Activated CD4-positive, alpha-beta memory T cell treated with anti-CD3 and anti-CD28 coated beads for 36 hours (primary cell): ENCODE measurements at regions of chr1 and their contacts with region 1.

Region 1: GRCh38 chr1:37692078-37692833 is at the start of gene CDCA8:
- DNase-seq: peak; percentile 99
- H3K4me3 Mint-ChIP-seq: peak within 1 kb of the TSS; percentile 97
- H3K27ac Mint-ChIP-seq: peak within 1 kb of the TSS; percentile 88
- H3K4me1 Mint-ChIP-seq: peaks cover 31% of the 10 kb centered on the region
- H3K27me3 Mint-ChIP-seq: no peaks in the 10 kb centered on the region
- total RNA-seq, gene CDCA8: 55.0 to 56.0 TPM

Region 2: DNA sequence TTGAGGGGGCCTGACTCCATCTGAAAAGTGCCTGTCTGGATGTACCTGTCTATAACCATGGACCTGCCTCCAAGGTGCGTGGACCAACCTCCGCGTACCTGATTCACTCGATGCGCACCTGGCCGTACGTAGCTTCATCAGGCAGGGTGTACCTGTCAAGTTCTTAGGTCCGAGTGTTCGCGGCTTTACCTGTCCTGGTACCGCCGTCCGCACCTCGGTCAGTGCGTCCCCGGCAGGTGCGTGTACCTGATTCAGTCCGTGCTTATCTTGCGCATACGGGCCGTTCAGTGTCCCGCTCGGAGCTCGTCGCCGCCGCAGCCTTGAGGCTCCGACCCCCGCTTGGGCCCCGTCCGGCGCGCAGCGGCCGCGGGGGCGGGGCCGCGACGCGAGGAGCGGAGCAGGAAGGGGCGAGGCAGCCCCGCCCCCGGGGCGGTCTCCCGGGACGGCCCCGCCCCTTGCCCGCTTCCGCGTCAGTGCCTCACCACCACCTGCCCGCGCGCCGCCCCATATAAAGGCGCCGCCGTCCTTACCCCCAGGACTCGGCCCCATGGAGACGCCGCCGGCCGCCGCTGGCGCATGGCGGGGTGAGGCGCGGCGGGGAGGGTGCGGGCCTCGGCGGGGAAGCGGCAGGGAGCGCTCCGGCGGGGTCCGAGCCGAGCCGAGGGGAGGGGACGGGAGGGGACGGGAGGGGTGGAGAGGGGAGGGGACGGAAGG is 218.1 kb before region 1 on chr1 and contains the start of gene ZC3H12A:
- CTCF ChIA-PET with region 1: interaction called, 4 read pairs
- POLR2A ChIA-PET with region 1: interaction called, 10 read pairs
- intact Hi-C with region 1: loop called (anchors 1 kb)
- DNase-seq: peak; percentile 93
- H3K4me3 Mint-ChIP-seq: peak within 1 kb of the TSS; percentile 94
- H3K27ac Mint-ChIP-seq: peak within 1 kb of the TSS; percentile 100
- H3K4me1 Mint-ChIP-seq: peaks cover 37% of the 10 kb centered on the region
- H3K27me3 Mint-ChIP-seq: no peaks in the 10 kb centered on the region
- total RNA-seq, gene ZC3H12A: 39.0 to 40.8 TPM

Region 3: DNA sequence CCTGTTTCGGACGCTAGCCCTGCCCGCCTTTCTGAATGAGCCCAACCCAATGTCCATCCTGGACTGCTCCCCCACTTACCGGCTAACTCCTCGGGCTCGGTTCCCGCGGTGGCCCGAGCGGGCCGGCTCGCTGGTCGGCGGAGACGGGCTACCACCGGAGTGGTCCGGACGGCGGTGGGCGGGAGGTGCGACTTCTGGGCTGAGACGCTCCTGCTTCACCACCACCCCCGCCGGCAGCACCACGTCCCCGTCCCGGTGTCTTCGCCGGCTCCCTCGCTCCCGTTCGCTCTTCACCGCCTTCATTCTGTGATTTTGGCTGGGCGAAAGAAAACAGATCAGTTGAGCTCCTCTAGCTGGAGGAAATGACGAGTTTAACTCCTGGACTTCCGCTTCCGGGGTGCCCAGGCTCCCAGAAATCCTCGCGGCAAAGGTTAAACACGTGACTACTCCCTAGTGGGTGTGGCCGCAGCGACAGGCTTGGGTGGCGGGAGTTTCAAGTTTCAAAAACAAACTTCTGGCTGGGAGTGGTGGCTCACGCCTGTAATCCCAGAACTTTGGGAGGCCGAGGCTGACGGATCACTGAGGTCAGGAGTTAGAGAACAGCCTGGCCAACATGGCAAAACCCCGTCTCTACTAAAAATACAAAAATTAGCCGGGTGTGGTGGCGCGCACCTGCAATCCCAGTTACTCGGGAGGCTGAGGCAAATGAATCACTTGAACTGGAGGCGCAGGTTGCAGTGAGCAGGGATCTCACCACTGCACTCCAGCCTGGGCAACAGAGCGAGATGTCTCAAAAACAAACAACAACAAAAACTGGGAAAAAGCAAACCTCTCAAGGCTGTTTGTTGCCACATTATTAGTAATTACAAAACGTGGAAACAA is 138.1 kb before region 1 on chr1 and contains the start of gene SNIP1:
- CTCF ChIA-PET with region 1: interaction called, 3 read pairs
- POLR2A ChIA-PET with region 1: interaction called, 3 read pairs
- intact Hi-C with region 1: loop called (anchors 1 kb)
- DNase-seq: peak; percentile 95
- H3K4me3 Mint-ChIP-seq: peak within 1 kb of the TSS; percentile 91
- H3K27ac Mint-ChIP-seq: peak within 1 kb of the TSS; percentile 93
- H3K4me1 Mint-ChIP-seq: peaks cover 45% of the 10 kb centered on the region
- H3K27me3 Mint-ChIP-seq: no peaks in the 10 kb centered on the region
- total RNA-seq, gene SNIP1: 18.1 to 19.0 TPM

Region 4: GRCh38 chr1:37595440-37596319 is 96.6 kb before region 1 on chr1 and contains the start of gene GNL2:
- CTCF ChIA-PET with region 1: interaction called, 7 read pairs
- POLR2A ChIA-PET with region 1: interaction called, 5 read pairs
- intact Hi-C with region 1: loop called (anchors 2 kb)
- DNase-seq: peak; percentile 98
- H3K4me3 Mint-ChIP-seq: peak within 1 kb of the TSS; percentile 100
- H3K27ac Mint-ChIP-seq: peak within 1 kb of the TSS; percentile 98
- H3K4me1 Mint-ChIP-seq: peaks cover 37% of the 10 kb centered on the region
- H3K27me3 Mint-ChIP-seq: no peaks in the 10 kb centered on the region
- total RNA-seq, gene GNL2: 70.7 to 71.2 TPM

Region 5: GRCh38 chr1:37755290-37755689 is 63.0 kb after region 1 on chr1:
- CTCF ChIA-PET with region 1: no interaction called
- POLR2A ChIA-PET with region 1: interaction called, 3 read pairs
- intact Hi-C with region 1: loop called (anchors 2 kb)
- DNase-seq: peak; percentile 73
- H3K4me3 Mint-ChIP-seq: no peak overlapping the region
- H3K27ac Mint-ChIP-seq: no peak overlapping the region
- H3K4me1 Mint-ChIP-seq: peaks cover 28% of the 10 kb centered on the region
- H3K27me3 Mint-ChIP-seq: peaks cover 32% of the 10 kb centered on the region

Region 6: GRCh38 chr1:37859507-37860345 is 167.5 kb after region 1 on chr1 and contains the start of gene MTF1:
- CTCF ChIA-PET with region 1: interaction called, 47 read pairs
- POLR2A ChIA-PET with region 1: interaction called, 3 read pairs
- intact Hi-C with region 1: loop called (anchors 1 kb)
- DNase-seq: peak; percentile 98
- H3K4me3 Mint-ChIP-seq: peak within 1 kb of the TSS; percentile 96
- H3K27ac Mint-ChIP-seq: peak within 1 kb of the TSS; percentile 93
- H3K4me1 Mint-ChIP-seq: peaks cover 36% of the 10 kb centered on the region
- H3K27me3 Mint-ChIP-seq: no peaks in the 10 kb centered on the region
- total RNA-seq, gene MTF1: 21.1 to 22.8 TPM